K562 (cell line): ENCODE measurements at regions of chr20 and their contacts with region 1.

Region 1: GRCh38 chr20:62359210-62360121 is 7.6 kb downstream of the LAMA5 start:
- DNase-seq: peak; percentile 82 to 89 (median 86)
- ATAC-seq: peak; percentile 83
- H3K4me3 ChIP-seq: peak overlapping the region; percentile 42
- H3K27ac ChIP-seq: peak overlapping the region; percentile 92
- H3K4me1 ChIP-seq: peaks cover 39 to 96% of the 10 kb centered on the region in 2 experiments
- H3K27me3 ChIP-seq: no peaks in the 10 kb centered on the region
- CTCF ChIP-seq: no peak
- EP300 ChIP-seq: no peak; the same call in 1 of the 2 replicates
- POLR2A ChIP-seq: peak; percentile 35; the same call in 1 of the 2 replicates
- RAD21 ChIP-seq: no peak

Region 2: GRCh38 chr20:62321521-62321948 is 37.9 kb before region 1 on chr20:
- CTCF ChIA-PET with region 1: no interaction called
- POLR2A ChIA-PET with region 1: interaction called, 4 read pairs
- in situ Hi-C with region 1: no loop called
- intact Hi-C with region 1: loop called (anchors 2 kb)
- DNase-seq: peak; percentile 75 to 96 (median 94)
- ATAC-seq: peak; percentile 92
- H3K4me3 ChIP-seq: no peak overlapping the region
- H3K27ac ChIP-seq: no peak overlapping the region
- H3K4me1 ChIP-seq: peaks cover 2 to 53% of the 10 kb centered on the region in 2 experiments; a peak in 2 of 5 replicates
- H3K27me3 ChIP-seq: no peaks in the 10 kb centered on the region
- CTCF ChIP-seq: peak in 1 of 3 experiments; percentile 5; a peak in 1 of 6 replicates
- EP300 ChIP-seq: no peak
- POLR2A ChIP-seq: no peak
- RAD21 ChIP-seq: no peak